CD8-positive, alpha-beta T cell (primary cell): ENCODE measurements at regions of chr1 and their contacts with region 1.

Region 1: GRCh38 chr1:236103646-236104218 is 38.6 kb upstream of the GPR137B start:
- DNase-seq: peak in 8 of 9 experiments; percentile 30 to 74 (median 61)
- ATAC-seq: peak; percentile 74
- H3K4me3 ChIP-seq: no peak overlapping the region
- H3K4me3 Mint-ChIP-seq: no peak overlapping the region
- H3K27ac ChIP-seq: no peak overlapping the region
- H3K27ac Mint-ChIP-seq: no peak overlapping the region
- H3K4me1 ChIP-seq: no peaks in the 10 kb centered on the region
- H3K4me1 Mint-ChIP-seq: peaks cover 2% of the 10 kb centered on the region
- H3K27me3 ChIP-seq: no peaks in the 10 kb centered on the region
- H3K27me3 Mint-ChIP-seq: no peaks in the 10 kb centered on the region
- CTCF ChIP-seq: peak; percentile 88

Region 2: DNA sequence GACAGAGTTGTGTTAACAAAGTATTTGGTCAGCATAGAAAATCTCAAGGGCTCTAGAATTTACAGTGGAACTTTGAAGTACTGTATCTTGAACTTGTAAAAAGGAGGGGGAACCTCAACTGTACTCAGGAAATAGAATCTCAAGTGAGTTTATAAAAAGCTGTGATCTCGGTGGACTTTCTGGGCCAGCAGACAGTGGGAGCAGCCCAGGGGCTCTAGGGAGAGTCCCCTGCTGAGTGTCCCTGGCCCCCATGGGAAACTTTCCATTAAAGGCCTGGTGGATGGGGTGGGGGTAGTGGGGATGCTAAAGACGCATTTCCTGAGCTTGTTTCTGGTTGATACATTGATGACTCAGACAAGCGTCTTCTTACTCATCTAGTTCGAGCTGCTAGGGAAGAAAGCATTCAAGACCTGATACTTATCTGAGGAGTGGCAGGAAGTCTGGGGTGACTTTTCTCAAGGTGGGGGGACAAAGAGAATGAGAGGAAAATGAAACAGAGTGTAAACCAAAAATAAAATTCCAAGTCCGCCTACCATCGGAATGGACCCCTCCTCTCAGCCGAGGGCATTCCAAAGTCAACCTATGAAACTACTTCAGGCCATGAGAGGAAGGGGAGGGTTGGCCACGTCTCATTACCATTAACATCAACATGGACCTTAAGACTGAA is 104.3 kb before region 1 on chr1:
- CTCF ChIA-PET with region 1: no interaction called
- POLR2A ChIA-PET with region 1: no interaction called
- intact Hi-C with region 1: loop called in 1 of 2 experiments (anchors 5 kb)
- DNase-seq: peak; percentile 22 to 93 (median 69)
- ATAC-seq: peak; percentile 79
- H3K4me3 ChIP-seq: no peak overlapping the region
- H3K4me3 Mint-ChIP-seq: peak overlapping the region; percentile 60
- H3K27ac ChIP-seq: peak overlapping the region; percentile 42 to 96
- H3K27ac Mint-ChIP-seq: peak overlapping the region; percentile 94
- H3K4me1 ChIP-seq: peaks cover 18% of the 10 kb centered on the region
- H3K4me1 Mint-ChIP-seq: peaks cover 29% of the 10 kb centered on the region
- H3K27me3 ChIP-seq: no peaks in the 10 kb centered on the region
- H3K27me3 Mint-ChIP-seq: no peaks in the 10 kb centered on the region
- CTCF ChIP-seq: no peak

Region 3: GRCh38 chr1:236451796-236452373 is 348.2 kb after region 1 on chr1:
- CTCF ChIA-PET with region 1: interaction called, 21 read pairs
- POLR2A ChIA-PET with region 1: no interaction called
- intact Hi-C with region 1: no loop called
- DNase-seq: peak; percentile 13 to 66 (median 40)
- ATAC-seq: peak; percentile 55
- H3K4me3 ChIP-seq: no peak overlapping the region
- H3K4me3 Mint-ChIP-seq: no peak overlapping the region
- H3K27ac ChIP-seq: no peak overlapping the region
- H3K27ac Mint-ChIP-seq: no peak overlapping the region
- H3K4me1 ChIP-seq: no peaks in the 10 kb centered on the region
- H3K4me1 Mint-ChIP-seq: no peaks in the 10 kb centered on the region
- H3K27me3 ChIP-seq: no peaks in the 10 kb centered on the region
- H3K27me3 Mint-ChIP-seq: peaks cover 3% of the 10 kb centered on the region
- CTCF ChIP-seq: no peak

Region 4: GRCh38 chr1:236489710-236490377 is 386.1 kb after region 1 on chr1:
- CTCF ChIA-PET with region 1: interaction called, 52 read pairs
- POLR2A ChIA-PET with region 1: no interaction called
- intact Hi-C with region 1: loop called (anchors 1 kb)
- DNase-seq: peak in 2 of 9 experiments; percentile 57 to 65
- ATAC-seq: no peak
- H3K4me3 ChIP-seq: no peak overlapping the region
- H3K4me3 Mint-ChIP-seq: no peak overlapping the region
- H3K27ac ChIP-seq: no peak overlapping the region
- H3K27ac Mint-ChIP-seq: no peak overlapping the region
- H3K4me1 ChIP-seq: no peaks in the 10 kb centered on the region
- H3K4me1 Mint-ChIP-seq: peaks cover 3% of the 10 kb centered on the region
- H3K27me3 ChIP-seq: peaks cover 0 to 4% of the 10 kb centered on the region in 2 experiments
- H3K27me3 Mint-ChIP-seq: peaks cover 32% of the 10 kb centered on the region
- CTCF ChIP-seq: peak; percentile 69

Region 5: DNA sequence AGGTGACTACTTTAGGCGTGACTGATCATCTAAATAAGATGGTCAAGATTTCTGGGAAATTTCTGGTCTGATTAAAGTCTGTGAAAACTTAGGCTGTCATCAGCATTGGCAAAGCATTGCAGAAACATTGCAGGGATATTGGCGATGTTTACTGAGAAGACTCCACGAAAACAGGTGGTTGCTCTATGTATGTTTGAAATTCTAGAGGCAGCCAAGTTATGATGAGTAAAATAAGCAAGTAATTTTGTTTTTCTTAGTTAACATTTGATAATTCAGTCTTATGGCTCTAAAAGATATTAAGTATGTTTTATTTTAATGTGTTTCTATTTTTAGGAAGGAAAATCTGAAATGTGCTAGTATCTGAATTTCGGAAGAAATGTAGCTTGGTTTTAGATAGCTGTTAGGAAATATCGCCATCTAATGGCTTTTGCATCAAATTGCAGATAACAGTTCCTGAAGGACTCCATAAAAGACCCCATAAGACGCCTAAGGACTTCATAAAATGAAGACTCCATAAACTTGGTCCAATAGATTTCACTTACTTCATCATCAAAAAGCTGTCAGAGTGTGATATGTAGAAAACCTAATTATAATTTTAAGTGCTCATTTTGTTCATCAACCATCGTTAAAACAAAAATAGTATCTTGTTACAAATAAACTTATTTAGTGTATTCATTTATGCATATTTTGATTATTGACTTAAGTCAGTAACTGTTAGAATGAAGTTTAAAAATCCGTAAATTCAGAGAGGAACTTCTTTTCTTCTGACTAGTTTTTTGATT is 1282.8 kb after region 1 on chr1:
- CTCF ChIA-PET with region 1: interaction called, 3 read pairs
- POLR2A ChIA-PET with region 1: no interaction called
- intact Hi-C with region 1: loop called (anchors 5 to 10 kb)
- DNase-seq: peak in 2 of 9 experiments; percentile 10 to 35
- ATAC-seq: no peak
- H3K4me3 ChIP-seq: no peak overlapping the region
- H3K4me3 Mint-ChIP-seq: no peak overlapping the region
- H3K27ac ChIP-seq: no peak overlapping the region
- H3K27ac Mint-ChIP-seq: no peak overlapping the region
- H3K4me1 ChIP-seq: no peaks in the 10 kb centered on the region
- H3K4me1 Mint-ChIP-seq: no peaks in the 10 kb centered on the region
- H3K27me3 ChIP-seq: no peaks in the 10 kb centered on the region
- H3K27me3 Mint-ChIP-seq: peaks cover 5% of the 10 kb centered on the region
- CTCF ChIP-seq: no peak

Region 6: DNA sequence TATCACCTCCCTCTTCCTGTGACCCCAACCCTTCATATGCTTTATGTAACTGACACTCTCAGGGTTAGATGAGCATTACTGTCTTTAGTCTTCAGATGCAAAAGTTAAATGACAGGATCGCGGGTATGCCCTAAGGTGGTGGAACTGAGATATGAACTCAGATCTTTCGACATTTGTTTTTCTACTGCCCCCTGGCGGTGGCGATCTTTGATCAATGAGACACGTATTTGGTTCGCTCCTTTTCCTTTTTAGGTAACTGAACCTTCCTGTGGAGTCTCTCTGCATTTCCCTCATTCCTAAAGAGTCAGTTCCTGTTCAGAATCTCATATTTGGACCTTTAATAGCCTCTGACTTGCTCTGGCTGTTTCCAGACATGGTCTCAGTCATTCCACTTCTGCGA is 1834.8 kb after region 1 on chr1:
- CTCF ChIA-PET with region 1: no interaction called
- POLR2A ChIA-PET with region 1: no interaction called
- intact Hi-C with region 1: no loop called
- DNase-seq: no peak
- ATAC-seq: no peak
- H3K4me3 ChIP-seq: no peak overlapping the region
- H3K4me3 Mint-ChIP-seq: no peak overlapping the region
- H3K27ac ChIP-seq: no peak overlapping the region
- H3K27ac Mint-ChIP-seq: no peak overlapping the region
- H3K4me1 ChIP-seq: no peaks in the 10 kb centered on the region
- H3K4me1 Mint-ChIP-seq: no peaks in the 10 kb centered on the region
- H3K27me3 ChIP-seq: no peaks in the 10 kb centered on the region
- H3K27me3 Mint-ChIP-seq: no peaks in the 10 kb centered on the region
- CTCF ChIP-seq: no peak